PC-3 (cell line): ENCODE measurements at regions of chr7 and their contacts with region 1.

Region 1: GRCh38 chr7:17144322-17144721 is 154.1 kb upstream of the AHR start:
- DNase-seq: peak; percentile 78
- ATAC-seq: peak; percentile 51
- H3K4me3 ChIP-seq: peak overlapping the region; percentile 2; the same call in 1 of the 2 replicates
- H3K27ac ChIP-seq: peak overlapping the region; percentile 95
- H3K4me1 ChIP-seq: peaks cover 67% of the 10 kb centered on the region
- H3K27me3 ChIP-seq: no peaks in the 10 kb centered on the region
- CTCF ChIP-seq: no peak

Region 2: DNA sequence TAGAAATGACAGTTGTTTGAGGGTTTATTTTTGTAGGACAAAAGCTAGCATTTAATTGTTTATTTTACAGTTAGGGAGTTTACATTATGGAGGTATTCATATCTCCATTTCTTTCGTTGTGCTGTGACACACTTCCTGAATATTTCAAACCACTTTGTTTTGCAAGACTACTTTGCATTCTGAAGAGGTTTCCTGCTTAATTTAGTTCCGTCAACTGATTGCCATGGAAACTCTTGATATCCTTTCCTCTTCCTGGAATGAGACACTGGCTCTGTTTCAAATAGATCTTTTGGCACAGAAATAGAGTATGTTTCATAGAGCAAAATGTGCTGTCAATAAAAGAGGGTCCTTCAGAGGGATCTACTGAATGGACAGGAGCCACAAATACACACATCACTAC is 103.0 kb before region 1 on chr7:
- CTCF ChIA-PET with region 1: no interaction called
- POLR2A ChIA-PET with region 1: no interaction called
- intact Hi-C with region 1: loop called (anchors 5 kb)
- DNase-seq: peak; percentile 87
- ATAC-seq: peak; percentile 71
- H3K4me3 ChIP-seq: peak overlapping the region; percentile 9; the same call in 1 of the 2 replicates
- H3K27ac ChIP-seq: peak overlapping the region; percentile 80
- H3K4me1 ChIP-seq: peaks cover 53% of the 10 kb centered on the region
- H3K27me3 ChIP-seq: no peaks in the 10 kb centered on the region
- CTCF ChIP-seq: no peak

Region 3: DNA sequence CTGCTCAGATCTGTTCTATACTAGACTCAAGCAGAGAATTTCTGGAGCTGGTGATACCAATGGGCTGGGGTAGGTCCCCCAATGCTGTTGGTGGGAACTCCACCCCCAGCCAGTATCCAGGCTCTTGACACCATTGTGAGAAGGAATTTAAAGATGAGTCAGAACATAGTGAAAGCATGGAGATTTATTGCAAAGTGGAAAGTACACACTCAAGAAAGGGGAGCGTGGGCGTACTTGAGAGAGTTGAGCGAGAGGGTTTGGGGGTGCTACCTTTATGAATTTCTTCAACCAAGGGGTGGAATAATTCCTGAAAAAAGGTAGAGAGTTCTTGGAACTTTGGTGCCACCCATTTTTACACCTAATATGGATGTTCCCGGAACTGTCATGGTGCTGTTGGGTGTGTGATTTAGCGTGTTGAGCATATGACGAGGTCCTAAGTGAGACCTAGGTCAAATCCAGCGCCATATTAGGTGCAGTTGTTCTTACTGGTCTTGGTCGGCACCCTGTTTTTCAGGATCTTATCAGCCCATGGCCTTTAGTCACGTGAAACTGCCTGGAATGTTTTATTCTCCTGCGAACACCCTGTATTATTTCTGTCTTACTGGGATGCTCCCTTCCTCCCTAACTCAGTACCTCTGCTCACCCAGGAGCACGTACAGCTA is 32.2 kb after region 1 on chr7:
- CTCF ChIA-PET with region 1: no interaction called
- POLR2A ChIA-PET with region 1: interaction called, 3 read pairs
- intact Hi-C with region 1: loop called (anchors 5 kb)
- DNase-seq: no peak
- ATAC-seq: no peak
- H3K4me3 ChIP-seq: no peak overlapping the region
- H3K27ac ChIP-seq: no peak overlapping the region
- H3K4me1 ChIP-seq: peaks cover 14% of the 10 kb centered on the region; the same call in 1 of the 2 replicates
- H3K27me3 ChIP-seq: no peaks in the 10 kb centered on the region
- CTCF ChIP-seq: no peak

Region 4: GRCh38 chr7:17234398-17235031 is 90.2 kb after region 1 on chr7:
- CTCF ChIA-PET with region 1: no interaction called
- POLR2A ChIA-PET with region 1: no interaction called
- intact Hi-C with region 1: loop called (anchors 2 kb)
- DNase-seq: peak; percentile 98
- ATAC-seq: peak; percentile 91
- H3K4me3 ChIP-seq: peak overlapping the region; percentile 52
- H3K27ac ChIP-seq: peak overlapping the region; percentile 93
- H3K4me1 ChIP-seq: peaks cover 32% of the 10 kb centered on the region
- H3K27me3 ChIP-seq: no peaks in the 10 kb centered on the region
- CTCF ChIP-seq: 0 out of 2 replicates have a peak, but pooled peaks have one; percentile 9

Region 5: GRCh38 chr7:17275749-17276671 is 131.7 kb after region 1 on chr7:
- CTCF ChIA-PET with region 1: no interaction called
- POLR2A ChIA-PET with region 1: no interaction called
- intact Hi-C with region 1: loop called (anchors 5 kb)
- DNase-seq: peak; percentile 92
- ATAC-seq: peak; percentile 91
- H3K4me3 ChIP-seq: peak overlapping the region; percentile 8; the same call in 1 of the 2 replicates
- H3K27ac ChIP-seq: peak overlapping the region; percentile 78
- H3K4me1 ChIP-seq: peaks cover 34% of the 10 kb centered on the region
- H3K27me3 ChIP-seq: no peaks in the 10 kb centered on the region
- CTCF ChIP-seq: no peak

Region 6: GRCh38 chr7:17307969-17308648 is 163.8 kb after region 1 on chr7:
- CTCF ChIA-PET with region 1: no interaction called
- POLR2A ChIA-PET with region 1: no interaction called
- intact Hi-C with region 1: no loop called
- DNase-seq: no peak
- ATAC-seq: no peak
- H3K4me3 ChIP-seq: no peak overlapping the region
- H3K27ac ChIP-seq: no peak overlapping the region
- H3K4me1 ChIP-seq: peaks cover 44% of the 10 kb centered on the region
- H3K27me3 ChIP-seq: no peaks in the 10 kb centered on the region
- CTCF ChIP-seq: no peak

Region 7: DNA sequence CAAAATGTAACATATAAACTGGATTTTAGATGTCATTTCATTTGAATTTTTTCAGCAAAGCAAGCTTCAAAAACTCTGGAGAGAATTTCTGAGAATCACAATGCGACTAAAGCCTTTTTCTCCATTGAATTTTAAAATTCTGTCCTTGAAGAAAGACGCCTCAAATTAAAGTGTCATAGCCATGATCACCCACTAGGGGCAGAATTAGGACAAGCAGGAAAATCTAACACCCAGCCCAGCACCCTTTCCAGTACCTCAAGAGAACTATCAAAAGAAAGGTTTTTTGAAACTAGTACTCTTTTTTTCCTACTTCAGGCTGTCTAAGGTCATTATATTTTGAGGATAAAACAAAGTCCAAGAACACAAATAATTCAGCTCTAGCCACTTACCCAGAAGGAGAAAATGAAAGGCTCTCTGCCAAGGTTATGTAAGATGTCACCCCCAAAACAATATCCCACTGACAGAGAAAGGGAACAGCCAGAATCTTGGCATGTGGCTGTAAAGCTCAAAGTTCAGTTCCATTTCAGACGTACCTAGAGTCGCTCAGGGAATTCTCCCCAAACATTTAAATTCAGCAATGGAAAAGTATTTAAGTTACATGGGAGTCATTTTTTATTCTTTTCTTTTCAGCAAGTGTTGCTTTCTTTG is 496.5 kb after region 1 on chr7:
- CTCF ChIA-PET with region 1: no interaction called
- POLR2A ChIA-PET with region 1: no interaction called
- intact Hi-C with region 1: loop called (anchors 10 kb)
- DNase-seq: peak; percentile 64
- ATAC-seq: no peak
- H3K4me3 ChIP-seq: no peak overlapping the region
- H3K27ac ChIP-seq: no peak overlapping the region
- H3K4me1 ChIP-seq: no peaks in the 10 kb centered on the region
- H3K27me3 ChIP-seq: no peaks in the 10 kb centered on the region
- CTCF ChIP-seq: peak; percentile 76